IMR-90 (cell line): ENCODE measurements at regions of chr22 and their contacts with region 1.

Region 1: DNA sequence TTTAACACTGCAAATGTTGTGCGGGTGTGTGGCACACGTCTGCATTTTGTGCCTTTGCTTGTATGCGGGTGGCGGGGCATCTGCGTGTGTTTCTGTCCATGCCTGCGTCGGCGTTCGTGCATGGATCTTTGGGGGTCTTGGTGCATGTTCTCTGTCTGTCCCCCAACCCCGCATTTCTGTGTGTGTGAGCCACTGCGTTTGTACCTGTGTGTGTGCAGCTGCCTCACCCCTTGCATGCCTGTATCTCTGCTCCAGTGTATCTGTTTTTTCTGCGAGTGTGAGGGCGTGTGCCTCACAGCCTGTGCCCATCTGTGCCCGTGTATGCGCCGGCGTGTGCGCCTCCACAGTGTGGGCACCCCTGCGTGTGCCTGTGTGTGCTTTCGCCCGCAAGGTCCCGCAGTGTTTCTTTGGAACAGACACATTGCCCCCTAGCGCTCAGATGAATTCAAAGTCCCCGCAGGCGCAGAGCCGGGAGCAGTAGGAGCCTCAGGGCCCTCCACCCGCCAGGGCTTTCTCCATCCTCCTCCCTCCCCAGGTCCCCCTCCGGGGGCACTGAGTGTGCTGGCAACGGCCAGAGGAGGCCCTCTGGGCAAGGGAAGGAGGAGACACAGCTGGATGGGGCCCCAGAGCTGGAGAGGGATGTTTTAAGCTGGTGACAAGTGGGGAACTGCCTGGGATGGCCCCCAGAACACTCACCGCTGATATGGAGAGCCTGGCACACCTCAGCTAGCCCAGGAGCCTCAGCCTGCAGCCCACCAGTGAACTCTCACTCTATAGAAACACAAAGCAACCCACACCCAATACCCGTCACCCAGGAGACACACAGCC is 3.1 kb upstream of the MN1 start:
- DNase-seq: peak; percentile 64
- ATAC-seq: peak; percentile 56
- H3K4me3 ChIP-seq: no peak overlapping the region
- H3K27ac ChIP-seq: no peak overlapping the region
- H3K4me1 ChIP-seq: peaks cover 8% of the 10 kb centered on the region
- H3K27me3 ChIP-seq: no peaks in the 10 kb centered on the region; the same call in 1 of the 2 replicates
- CTCF ChIP-seq: peak; percentile 75
- POLR2A ChIP-seq: no peak
- RAD21 ChIP-seq: peak; percentile 86

Region 2: DNA sequence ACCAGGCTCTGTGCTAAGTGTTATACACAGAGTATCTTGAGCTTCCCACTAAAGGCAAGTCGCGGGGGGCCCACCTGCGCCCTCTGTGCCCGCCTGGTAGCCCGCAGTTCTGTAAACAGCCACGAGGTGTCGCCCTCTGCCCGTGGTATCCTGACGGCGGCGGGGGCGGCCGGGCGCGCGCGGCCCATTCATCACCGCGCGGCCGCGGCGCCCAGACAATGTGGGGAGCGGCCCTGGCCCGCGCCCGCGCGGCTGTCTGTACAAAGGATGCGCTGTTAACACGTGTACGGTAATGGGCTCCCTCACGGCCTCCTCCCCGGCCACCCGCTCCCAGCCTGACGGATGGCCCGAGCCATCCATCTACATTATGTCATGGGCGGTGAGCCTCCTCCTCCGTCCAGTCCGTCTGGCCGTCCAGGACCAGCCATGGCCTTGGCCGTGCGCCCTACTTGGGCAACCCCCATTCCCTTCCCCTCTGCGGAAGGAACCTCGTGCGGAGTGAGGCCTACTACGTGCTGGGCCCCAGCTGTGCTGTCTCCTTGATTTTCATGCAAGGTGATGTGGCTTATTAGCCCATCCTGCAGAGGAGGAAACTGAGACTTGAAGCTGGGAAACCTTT is 1047.9 kb before region 1 on chr22:
- CTCF ChIA-PET with region 1: interaction called, 4 read pairs
- POLR2A ChIA-PET with region 1: no interaction called
- dilution Hi-C with region 1: no loop called
- in situ Hi-C with region 1: no loop called
- intact Hi-C with region 1: loop called (anchors 1 kb)
- DNase-seq: peak; percentile 36
- ATAC-seq: peak; percentile 95
- H3K4me3 ChIP-seq: peak overlapping the region; percentile 17
- H3K27ac ChIP-seq: no peak overlapping the region
- H3K4me1 ChIP-seq: no peaks in the 10 kb centered on the region
- H3K27me3 ChIP-seq: no peaks in the 10 kb centered on the region
- CTCF ChIP-seq: peak; percentile 88
- POLR2A ChIP-seq: 0 out of 2 replicates have a peak, but pooled peaks have one; percentile 46
- RAD21 ChIP-seq: peak; percentile 90

Region 3: GRCh38 chr22:27107824-27108223 is 696.9 kb before region 1 on chr22:
- CTCF ChIA-PET with region 1: no interaction called
- POLR2A ChIA-PET with region 1: no interaction called
- dilution Hi-C with region 1: no loop called
- in situ Hi-C with region 1: no loop called
- intact Hi-C with region 1: loop called (anchors 5 kb)
- DNase-seq: peak; percentile 94
- ATAC-seq: peak; percentile 72
- H3K4me3 ChIP-seq: no peak overlapping the region
- H3K27ac ChIP-seq: no peak overlapping the region
- H3K4me1 ChIP-seq: peaks cover 13% of the 10 kb centered on the region
- H3K27me3 ChIP-seq: peaks cover 8% of the 10 kb centered on the region
- CTCF ChIP-seq: no peak
- POLR2A ChIP-seq: no peak
- RAD21 ChIP-seq: no peak

Region 4: DNA sequence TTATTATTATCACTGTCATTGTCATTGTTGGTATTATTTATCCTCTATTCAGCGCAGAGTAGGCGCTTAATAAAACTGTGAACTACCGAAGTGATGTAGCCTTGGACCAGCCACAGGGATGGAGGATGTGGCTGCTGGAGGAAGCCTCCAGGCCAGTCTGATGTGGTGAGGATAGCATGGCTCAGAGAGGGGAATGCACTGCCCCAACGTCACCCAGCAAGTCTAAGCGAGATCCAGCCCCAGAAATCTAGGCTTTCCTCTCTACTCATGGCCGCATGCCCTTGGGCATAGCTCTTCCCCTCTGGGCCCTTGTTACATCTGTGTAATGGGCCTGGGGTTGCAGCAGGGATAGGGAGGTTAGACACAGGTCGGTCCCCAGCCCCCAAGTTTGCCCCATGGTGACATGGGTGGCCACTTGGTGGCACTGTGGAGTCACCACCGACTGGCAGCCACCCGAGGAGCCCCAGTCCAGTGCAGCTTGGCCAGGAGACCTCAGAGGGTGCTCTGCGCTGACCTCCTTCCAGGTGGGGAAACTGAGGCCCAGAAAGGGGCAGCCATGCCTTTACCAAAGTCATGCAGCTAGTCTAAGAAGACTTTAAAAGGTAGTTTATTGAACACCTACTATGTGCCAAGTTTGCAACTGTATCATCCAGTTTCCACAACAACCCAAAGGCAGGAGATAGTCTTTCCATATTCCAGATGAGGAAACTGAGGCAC is 398.9 kb before region 1 on chr22:
- CTCF ChIA-PET with region 1: interaction called, 4 read pairs
- POLR2A ChIA-PET with region 1: no interaction called
- dilution Hi-C with region 1: no loop called
- in situ Hi-C with region 1: loop called (anchors 10 kb)
- intact Hi-C with region 1: loop called (anchors 1 kb)
- DNase-seq: peak; percentile 45
- ATAC-seq: peak; percentile 95
- H3K4me3 ChIP-seq: no peak overlapping the region
- H3K27ac ChIP-seq: no peak overlapping the region
- H3K4me1 ChIP-seq: no peaks in the 10 kb centered on the region
- H3K27me3 ChIP-seq: peaks cover 14% of the 10 kb centered on the region
- CTCF ChIP-seq: peak; percentile 79
- POLR2A ChIP-seq: peak; percentile 28; the same call in 1 of the 2 replicates
- RAD21 ChIP-seq: peak; percentile 93

Region 5: DNA sequence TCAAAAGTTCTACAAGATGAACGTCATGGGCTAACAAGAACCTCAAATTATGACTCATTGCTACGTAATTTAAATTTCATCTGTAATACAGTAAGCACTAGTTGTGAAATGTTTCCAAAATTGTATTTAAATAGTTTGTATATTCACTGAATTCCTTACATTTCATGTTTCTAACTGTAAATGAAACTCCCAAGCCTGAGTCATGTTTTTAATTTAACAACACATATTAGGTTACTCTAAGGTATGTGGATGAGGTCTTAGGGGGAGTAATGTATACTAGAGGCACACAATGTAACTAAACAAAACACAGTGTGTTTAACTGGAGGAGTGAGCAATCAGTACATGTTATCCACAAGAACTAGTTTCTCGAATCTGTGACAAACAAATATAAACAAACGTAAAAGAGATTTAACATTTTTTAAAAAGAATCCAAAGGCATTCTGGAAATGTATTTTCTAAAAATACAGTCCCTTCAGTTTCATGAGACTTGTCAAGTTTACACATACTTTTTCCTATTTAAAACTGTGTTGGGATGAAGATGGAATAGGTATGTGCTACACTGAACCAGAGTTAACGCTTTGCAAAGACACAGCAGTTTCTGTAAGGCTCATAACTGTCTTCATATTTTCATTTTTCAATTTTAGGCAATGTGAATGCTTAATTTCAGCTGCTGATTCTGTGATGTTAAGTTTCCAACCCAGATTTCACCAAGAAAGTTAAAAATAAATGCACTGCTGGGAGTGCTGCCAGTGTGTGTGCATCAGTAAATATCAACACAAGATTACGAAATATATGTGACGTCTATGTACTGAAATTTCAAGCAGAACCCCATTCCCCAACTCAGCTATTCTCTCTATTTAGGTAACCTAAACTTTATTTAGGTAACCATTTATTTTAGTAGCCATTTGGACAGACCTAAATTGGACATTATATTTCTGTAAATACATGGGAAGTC is 61.7 kb after region 1 on chr22:
- CTCF ChIA-PET with region 1: no interaction called
- POLR2A ChIA-PET with region 1: no interaction called
- dilution Hi-C with region 1: no loop called
- in situ Hi-C with region 1: no loop called
- intact Hi-C with region 1: loop called (anchors 5 kb)
- DNase-seq: peak; percentile 99
- ATAC-seq: peak; percentile 88
- H3K4me3 ChIP-seq: no peak overlapping the region
- H3K27ac ChIP-seq: peak overlapping the region; percentile 100; the same call in 1 of the 2 replicates
- H3K4me1 ChIP-seq: peaks cover 36% of the 10 kb centered on the region
- H3K27me3 ChIP-seq: no peaks in the 10 kb centered on the region
- CTCF ChIP-seq: no peak
- POLR2A ChIP-seq: no peak
- RAD21 ChIP-seq: no peak